ENCODE measurements at regions of chr12 and their contacts with region 1.

Region 1: GRCh38 chr12:94262228-94263010 is 114.0 kb downstream of the PLXNC1 start:
- DNase-seq: peak; percentile 83 to 91 (median 89)
- ATAC-seq: peak; percentile 57 to 92 (median 86)
- H3K4me3 ChIP-seq: peak overlapping the region; percentile 5 to 65 (median 56)
- H3K27ac ChIP-seq: peak overlapping the region; percentile 23 to 94 (median 82)
- H3K4me1 ChIP-seq: peaks cover 9 to 68% (median 37%) of the 10 kb centered on the region in 12 donors
- H3K27me3 ChIP-seq: no peaks in the 10 kb centered on the region
- CTCF ChIP-seq: no peak
- POLR2A ChIP-seq: no peak

Region 2: GRCh38 chr12:94297876-94298505 is 35.6 kb after region 1 on chr12:
- intact Hi-C with region 1: loop called in 1 of 10 experiments (anchors 5 kb)
- DNase-seq: no peak
- ATAC-seq: no peak
- H3K4me3 ChIP-seq: no peak overlapping the region
- H3K27ac ChIP-seq: no peak overlapping the region
- H3K4me1 ChIP-seq: peaks cover 0 to 18% (median 7%) of the 10 kb centered on the region in 12 donors
- H3K27me3 ChIP-seq: no peaks in the 10 kb centered on the region
- CTCF ChIP-seq: no peak
- POLR2A ChIP-seq: no peak

Region 3: DNA sequence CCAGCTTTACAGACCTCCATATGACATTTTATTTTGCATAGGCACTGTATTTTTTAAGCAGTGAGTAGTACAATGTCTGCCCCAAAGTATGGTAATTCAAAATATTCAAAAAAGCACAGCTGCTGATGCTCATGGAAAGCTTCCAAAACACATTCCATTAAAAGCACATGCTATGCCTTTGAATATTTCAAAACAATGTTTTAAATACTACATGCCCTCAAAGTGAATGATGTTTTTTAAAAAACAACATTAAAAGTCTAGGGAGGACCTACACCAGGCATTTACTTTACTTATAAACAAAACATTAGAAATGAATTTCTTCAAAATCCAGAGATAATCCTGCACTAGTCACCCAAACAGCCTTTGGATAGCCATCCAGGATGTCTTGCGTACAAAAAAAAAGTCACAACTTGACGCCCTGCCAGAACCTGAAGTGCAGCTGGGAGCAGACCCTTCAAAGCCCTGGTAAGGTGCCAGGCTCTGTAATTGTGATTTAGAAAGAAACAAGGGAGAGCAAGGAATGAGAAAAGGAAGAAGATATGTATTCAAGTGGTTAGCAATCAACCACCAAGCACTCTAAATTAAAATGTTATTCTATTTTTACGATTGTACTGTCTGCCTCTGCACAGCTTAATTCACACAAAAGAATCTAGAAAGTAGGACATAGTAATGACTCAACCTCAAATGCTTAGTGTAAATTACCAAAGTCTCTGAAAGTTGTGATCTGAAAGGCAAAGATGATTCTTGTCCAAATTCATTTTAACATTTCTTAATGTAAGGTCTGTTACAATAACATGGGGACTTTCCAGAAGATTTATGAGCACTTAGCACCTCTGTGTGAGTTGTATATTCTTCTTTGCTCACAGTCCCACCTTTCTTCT is 165.3 kb after region 1 on chr12:
- intact Hi-C with region 1: loop called in 1 of 10 experiments (anchors 10 kb)
- DNase-seq: peak in 4 of 5 donors; percentile 52 to 61 (median 55)
- ATAC-seq: peak; percentile 39 to 82 (median 65)
- H3K4me3 ChIP-seq: no peak overlapping the region
- H3K27ac ChIP-seq: peak overlapping the region in 6 of 12 donors; percentile 6 to 48 (median 32)
- H3K4me1 ChIP-seq: peaks cover 0 to 23% (median 14%) of the 10 kb centered on the region in 12 donors
- H3K27me3 ChIP-seq: no peaks in the 10 kb centered on the region
- CTCF ChIP-seq: no peak
- POLR2A ChIP-seq: no peak

Measured in heart left ventricle (tissue), 16 donors.